ENCODE measurements at regions of chr9 and their contacts with region 1.

Region 1: DNA sequence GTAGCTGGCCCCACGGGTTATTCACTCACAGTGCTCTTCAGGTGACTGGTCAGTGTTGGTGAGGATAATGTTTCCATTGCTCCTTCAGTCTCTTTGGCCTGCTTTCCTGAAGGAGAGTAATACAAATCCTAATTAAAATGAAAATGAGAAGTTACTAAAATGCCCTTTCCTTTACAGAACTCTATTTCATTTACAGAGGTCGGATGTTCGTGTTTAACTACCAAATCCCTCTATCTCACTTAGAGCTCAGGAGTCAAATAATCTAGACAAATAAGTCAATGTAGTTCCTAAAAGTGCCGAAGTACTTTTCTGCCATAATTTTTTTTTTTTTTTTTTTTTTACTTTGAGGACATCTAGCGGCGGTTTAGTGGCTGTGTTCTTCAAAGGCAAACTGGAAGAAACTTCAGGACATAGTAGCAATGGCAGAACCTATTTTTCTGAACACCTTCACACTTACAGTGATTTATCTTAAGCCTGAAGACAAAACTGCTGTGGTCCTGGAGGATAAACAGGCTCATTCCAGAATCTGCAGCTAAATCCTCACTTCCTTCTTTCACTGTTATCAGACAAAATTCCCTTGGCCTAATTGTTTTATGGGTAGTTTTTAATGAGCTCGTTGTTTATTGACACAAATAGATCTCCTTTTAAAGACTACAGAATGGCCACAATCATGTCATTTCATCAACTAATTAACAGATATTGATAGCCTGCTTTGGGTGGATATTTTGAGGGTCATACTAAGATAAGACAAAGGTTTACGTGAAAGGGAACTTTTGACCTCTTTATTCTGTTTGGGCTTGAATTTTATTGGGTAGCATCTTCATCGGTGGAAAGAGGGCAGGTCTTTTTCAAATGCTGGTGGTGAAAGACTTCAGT is 207.6 kb upstream of the DMRTA1 start:
- DNase-seq: no peak
- ATAC-seq: no peak
- H3K4me3 Mint-ChIP-seq: no peak overlapping the region
- H3K27ac Mint-ChIP-seq: peak overlapping the region; percentile 48
- H3K4me1 Mint-ChIP-seq: peaks cover 60% of the 10 kb centered on the region
- H3K27me3 Mint-ChIP-seq: peaks cover 1% of the 10 kb centered on the region
- CTCF ChIP-seq: no peak

Region 2: GRCh38 chr9:21443849-21444625 is 795.0 kb before region 1 on chr9:
- CTCF ChIA-PET with region 1: no interaction called
- POLR2A ChIA-PET with region 1: no interaction called
- intact Hi-C with region 1: loop called (anchors 1 kb)
- DNase-seq: no peak
- ATAC-seq: peak; percentile 95
- H3K4me3 Mint-ChIP-seq: no peak overlapping the region
- H3K27ac Mint-ChIP-seq: peak overlapping the region; percentile 30
- H3K4me1 Mint-ChIP-seq: peaks cover 12% of the 10 kb centered on the region
- H3K27me3 Mint-ChIP-seq: peaks cover 23% of the 10 kb centered on the region
- CTCF ChIP-seq: no peak

Region 3: GRCh38 chr9:21965401-21965951 is 273.6 kb before region 1 on chr9:
- CTCF ChIA-PET with region 1: interaction called, 3 read pairs
- POLR2A ChIA-PET with region 1: no interaction called
- intact Hi-C with region 1: loop called (anchors 2 kb)
- DNase-seq: peak; percentile 41
- ATAC-seq: peak; percentile 67
- H3K4me3 Mint-ChIP-seq: peak overlapping the region; percentile 77
- H3K27ac Mint-ChIP-seq: peak overlapping the region; percentile 64
- H3K4me1 Mint-ChIP-seq: peaks cover 19% of the 10 kb centered on the region
- H3K27me3 Mint-ChIP-seq: peaks cover 74% of the 10 kb centered on the region
- CTCF ChIP-seq: no peak

Region 4: DNA sequence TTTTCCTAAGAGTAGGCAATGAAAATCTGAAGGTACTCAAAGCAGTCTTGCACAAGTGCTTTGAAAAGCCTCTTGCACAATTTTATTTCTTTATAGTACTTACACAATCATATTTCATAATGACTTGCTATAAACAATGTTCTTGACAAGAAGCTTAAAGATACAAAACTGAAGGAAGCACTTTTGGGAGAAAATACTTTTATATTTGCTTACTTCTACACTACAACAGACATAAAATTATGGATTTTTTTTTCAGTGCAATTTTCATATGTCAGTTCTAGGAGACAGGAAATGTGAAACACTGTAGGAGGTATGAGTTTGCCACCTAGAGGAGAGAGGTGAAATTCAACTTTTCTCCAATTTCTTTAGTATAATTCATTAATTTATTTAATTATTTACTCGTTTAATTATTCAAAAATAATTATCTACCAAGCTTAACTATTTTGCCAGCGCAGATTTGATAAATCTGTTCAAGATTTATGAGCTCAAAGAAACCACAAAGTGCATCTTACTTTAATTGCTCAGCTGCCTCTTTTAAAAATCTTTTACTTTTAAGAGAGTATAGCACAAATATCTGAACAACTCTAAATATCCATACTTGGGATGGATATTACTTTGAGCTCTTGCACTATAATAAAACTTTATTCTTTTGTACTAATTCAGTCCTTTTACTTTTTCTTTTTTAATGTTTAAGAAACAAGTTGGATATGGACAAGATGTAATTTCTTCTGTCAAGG is 200.9 kb before region 1 on chr9:
- CTCF ChIA-PET with region 1: interaction called, 15 read pairs
- POLR2A ChIA-PET with region 1: no interaction called
- intact Hi-C with region 1: loop called (anchors 2 kb)
- DNase-seq: no peak
- ATAC-seq: no peak
- H3K4me3 Mint-ChIP-seq: no peak overlapping the region
- H3K27ac Mint-ChIP-seq: no peak overlapping the region
- H3K4me1 Mint-ChIP-seq: no peaks in the 10 kb centered on the region
- H3K27me3 Mint-ChIP-seq: no peaks in the 10 kb centered on the region
- CTCF ChIP-seq: no peak

Region 5: DNA sequence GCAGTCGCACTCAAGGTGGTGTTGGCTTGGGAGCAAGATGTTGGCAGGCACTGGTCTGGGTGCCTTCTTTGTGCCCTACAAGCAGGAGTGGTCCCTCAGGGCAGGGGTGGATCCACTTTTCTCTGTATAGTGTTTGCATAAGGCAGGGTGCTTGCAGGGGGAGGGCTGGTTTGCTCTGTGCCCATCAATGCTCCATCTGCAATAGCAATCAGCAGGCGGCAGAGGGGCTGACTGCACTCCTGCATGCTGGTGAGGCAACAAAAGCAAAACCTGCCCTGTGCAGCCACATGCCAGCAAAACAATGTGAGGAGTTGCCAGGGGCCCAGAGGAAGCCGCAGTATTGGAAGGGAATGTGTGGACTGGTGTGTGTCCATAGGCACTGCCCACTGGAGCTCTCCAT is 38.7 kb before region 1 on chr9:
- CTCF ChIA-PET with region 1: interaction called, 6 read pairs
- POLR2A ChIA-PET with region 1: no interaction called
- intact Hi-C with region 1: loop called (anchors 1 kb)
- DNase-seq: no peak
- ATAC-seq: no peak
- H3K4me3 Mint-ChIP-seq: no peak overlapping the region
- H3K27ac Mint-ChIP-seq: no peak overlapping the region
- H3K4me1 Mint-ChIP-seq: peaks cover 66% of the 10 kb centered on the region
- H3K27me3 Mint-ChIP-seq: no peaks in the 10 kb centered on the region
- CTCF ChIP-seq: no peak

Measured in activated B cell treated with CpG ODN at 0.5 μM for 24 hours (primary cell).